Ascending aorta (tissue), 2 donors: ENCODE measurements at regions of chr1 and their contacts with region 1.

Region 1: GRCh38 chr1:109426278-109427170 is at the start of gene PSMA5:
- DNase-seq: peak; percentile 97 to 99
- H3K4me3 ChIP-seq: peak within 1 kb of the TSS; percentile 77 to 87
- H3K27ac ChIP-seq: peak within 1 kb of the TSS; percentile 87
- H3K4me1 ChIP-seq: peaks cover 4 to 12% of the 10 kb centered on the region in 2 donors
- H3K27me3 ChIP-seq: no peaks in the 10 kb centered on the region
- CTCF ChIP-seq: no peak
- total RNA-seq, gene PSMA5: 2.6 TPM

Region 2: GRCh38 chr1:108963052-108963686 is 463.4 kb before region 1 on chr1 and contains the start of gene CLCC1:
- intact Hi-C with region 1: loop called (anchors 5 kb)
- DNase-seq: peak; percentile 71 to 96
- H3K4me3 ChIP-seq: peak within 1 kb of the TSS; percentile 76 to 91
- H3K27ac ChIP-seq: peak within 1 kb of the TSS; percentile 93 to 97
- H3K4me1 ChIP-seq: peaks cover 11 to 13% of the 10 kb centered on the region in 2 donors
- H3K27me3 ChIP-seq: no peaks in the 10 kb centered on the region
- CTCF ChIP-seq: no peak
- total RNA-seq, gene CLCC1: 18.1 TPM

Region 3: DNA sequence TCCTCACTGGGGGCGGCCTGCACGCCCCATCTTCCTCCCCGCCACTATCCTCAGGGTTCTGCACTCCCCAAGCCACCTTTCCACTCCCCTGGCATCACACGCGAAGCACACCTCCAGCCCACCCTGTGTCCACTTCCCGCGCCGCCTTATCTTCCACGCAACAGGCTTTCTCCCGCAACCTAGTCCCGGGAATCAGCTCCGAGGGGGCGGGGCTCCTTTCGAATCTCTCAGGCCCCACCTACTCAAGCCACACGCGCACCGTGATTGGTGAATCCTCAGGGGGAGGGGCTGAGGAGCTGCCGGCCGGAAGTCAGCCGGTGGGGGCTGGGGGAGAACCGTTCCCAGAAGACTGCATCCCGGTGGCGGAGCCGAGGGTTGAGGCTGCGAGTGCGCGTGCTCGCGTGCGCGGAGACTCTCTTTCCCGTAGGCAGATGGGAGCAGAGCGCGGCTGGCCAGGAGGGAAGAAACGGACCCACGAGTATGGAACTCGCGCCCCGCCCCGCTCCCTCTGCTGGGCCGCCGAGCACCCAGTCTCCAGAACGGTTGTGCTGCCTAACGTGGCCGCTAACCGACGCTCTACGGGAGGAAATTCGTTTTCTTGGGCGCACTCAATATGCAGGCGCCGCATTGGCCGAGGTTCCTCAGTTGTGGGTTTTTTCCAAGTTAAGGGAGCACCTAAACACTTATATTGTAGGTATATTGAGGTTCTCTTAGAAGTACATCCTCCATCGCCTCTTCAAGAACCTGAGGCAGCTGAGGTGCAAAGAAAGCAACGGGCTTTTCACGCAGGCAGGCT is 143.4 kb before region 1 on chr1 and contains the start of gene PSRC1:
- intact Hi-C with region 1: loop called (anchors 1 kb)
- DNase-seq: peak; percentile 84 to 97
- H3K4me3 ChIP-seq: peak within 1 kb of the TSS; percentile 66 to 84
- H3K27ac ChIP-seq: peak within 1 kb of the TSS; percentile 84 to 91
- H3K4me1 ChIP-seq: peaks cover 0 to 13% of the 10 kb centered on the region in 2 donors
- H3K27me3 ChIP-seq: no peaks in the 10 kb centered on the region
- CTCF ChIP-seq: peak; percentile 45 to 65 (median 64)
- total RNA-seq, gene PSRC1: 1.3 TPM

Region 4: DNA sequence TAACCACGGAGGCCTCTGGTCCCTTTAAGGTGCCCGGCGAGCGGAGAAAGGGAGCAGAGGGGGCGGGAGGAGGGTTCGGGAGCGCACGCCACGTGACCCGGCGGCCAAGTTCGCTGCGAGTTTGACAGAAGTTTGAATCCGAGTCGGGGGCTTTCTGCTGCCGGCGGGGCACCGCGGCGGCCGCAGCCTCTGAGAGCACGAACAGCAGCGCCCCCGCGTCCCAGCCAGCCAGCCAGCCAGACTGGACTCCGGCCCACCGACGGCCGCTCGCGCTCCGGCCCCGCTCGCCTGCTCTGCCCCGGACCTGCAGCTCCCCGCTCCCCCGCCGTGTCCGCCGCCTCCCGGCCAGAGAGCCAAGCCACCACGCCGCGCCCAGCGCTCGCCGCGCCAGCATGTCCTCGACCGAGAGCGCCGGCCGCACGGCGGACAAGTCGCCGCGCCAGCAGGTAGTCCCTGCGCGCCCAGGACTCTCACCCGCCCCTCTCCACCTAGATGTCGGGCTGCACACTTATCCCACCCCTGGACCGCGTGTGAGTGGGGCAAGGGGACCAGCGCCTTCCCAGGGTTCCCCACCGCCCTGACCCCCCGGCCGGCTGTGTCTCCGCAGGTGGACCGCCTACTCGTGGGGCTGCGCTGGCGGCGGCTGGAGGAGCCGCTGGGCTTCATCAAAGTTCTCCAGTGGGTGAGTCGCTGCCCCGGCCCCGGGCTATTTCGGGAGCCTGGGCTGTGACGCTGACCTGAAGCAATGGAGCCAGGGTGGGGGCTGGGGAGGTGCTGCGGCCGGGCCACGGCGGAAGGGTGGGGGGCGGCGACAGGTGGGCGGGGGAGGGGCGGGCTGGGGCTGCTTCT is 40.2 kb after region 1 on chr1 and contains the start of gene SYPL2:
- intact Hi-C with region 1: loop called (anchors 1 kb)
- DNase-seq: peak in 1 of 2 donors; percentile 82
- H3K4me3 ChIP-seq: peak within 1 kb of the TSS; percentile 57 to 91
- H3K27ac ChIP-seq: peak within 1 kb of the TSS; percentile 74 to 92
- H3K4me1 ChIP-seq: no peaks in the 10 kb centered on the region
- H3K27me3 ChIP-seq: no peaks in the 10 kb centered on the region
- CTCF ChIP-seq: peak in 1 of 3 experiments; percentile 9
- total RNA-seq, gene SYPL2: 8.1 TPM

Region 5: DNA sequence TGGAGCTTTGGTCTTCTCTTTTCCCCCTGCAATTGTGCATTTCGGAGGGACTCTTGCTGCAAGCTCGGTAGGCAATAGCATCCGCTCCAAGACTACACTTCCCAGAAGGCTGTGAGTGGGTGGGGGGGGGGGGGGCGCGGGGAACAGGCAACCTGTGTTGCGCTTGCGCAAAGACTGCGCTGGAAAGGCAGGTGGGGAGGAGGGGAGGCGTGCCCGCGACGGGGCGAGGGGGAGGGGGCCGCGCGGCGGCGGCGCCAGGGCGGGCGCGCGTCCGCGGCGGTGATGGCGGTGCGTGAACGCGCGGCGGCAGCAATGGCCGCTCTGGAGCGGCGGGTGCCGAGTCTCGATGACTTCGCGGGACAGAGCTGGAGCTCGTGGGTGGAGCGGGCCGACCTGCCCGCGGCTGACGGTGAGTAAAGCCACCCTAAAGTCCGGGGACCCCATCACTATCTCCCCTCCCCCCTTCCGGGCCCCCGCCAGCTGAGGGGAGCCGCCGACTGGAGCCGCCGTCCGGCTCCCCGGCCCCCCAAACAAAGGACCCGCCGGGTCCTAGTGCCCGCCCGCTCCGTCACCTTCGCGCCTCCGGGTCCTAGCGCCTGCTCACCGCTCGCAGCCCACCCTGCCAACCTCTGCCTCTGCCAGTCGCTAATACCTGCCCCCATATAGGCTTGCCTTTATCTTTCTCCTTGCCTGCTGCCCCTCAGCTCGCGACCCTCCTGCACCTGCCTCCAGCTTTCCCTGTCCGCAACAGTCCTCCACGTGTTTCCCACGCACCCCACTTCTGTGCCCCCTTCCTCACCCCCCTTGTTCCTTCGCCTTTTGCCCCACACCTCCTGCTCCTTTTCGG is 57.4 kb after region 1 on chr1 and contains the start of gene ATXN7L2:
- intact Hi-C with region 1: loop called (anchors 1 kb)
- DNase-seq: peak; percentile 72 to 95
- H3K4me3 ChIP-seq: peak within 1 kb of the TSS; percentile 79
- H3K27ac ChIP-seq: peak within 1 kb of the TSS; percentile 91 to 93
- H3K4me1 ChIP-seq: peaks cover 6 to 12% of the 10 kb centered on the region in 2 donors
- H3K27me3 ChIP-seq: no peaks in the 10 kb centered on the region
- CTCF ChIP-seq: no peak
- total RNA-seq, gene ATXN7L2: 5.9 TPM

Region 6: DNA sequence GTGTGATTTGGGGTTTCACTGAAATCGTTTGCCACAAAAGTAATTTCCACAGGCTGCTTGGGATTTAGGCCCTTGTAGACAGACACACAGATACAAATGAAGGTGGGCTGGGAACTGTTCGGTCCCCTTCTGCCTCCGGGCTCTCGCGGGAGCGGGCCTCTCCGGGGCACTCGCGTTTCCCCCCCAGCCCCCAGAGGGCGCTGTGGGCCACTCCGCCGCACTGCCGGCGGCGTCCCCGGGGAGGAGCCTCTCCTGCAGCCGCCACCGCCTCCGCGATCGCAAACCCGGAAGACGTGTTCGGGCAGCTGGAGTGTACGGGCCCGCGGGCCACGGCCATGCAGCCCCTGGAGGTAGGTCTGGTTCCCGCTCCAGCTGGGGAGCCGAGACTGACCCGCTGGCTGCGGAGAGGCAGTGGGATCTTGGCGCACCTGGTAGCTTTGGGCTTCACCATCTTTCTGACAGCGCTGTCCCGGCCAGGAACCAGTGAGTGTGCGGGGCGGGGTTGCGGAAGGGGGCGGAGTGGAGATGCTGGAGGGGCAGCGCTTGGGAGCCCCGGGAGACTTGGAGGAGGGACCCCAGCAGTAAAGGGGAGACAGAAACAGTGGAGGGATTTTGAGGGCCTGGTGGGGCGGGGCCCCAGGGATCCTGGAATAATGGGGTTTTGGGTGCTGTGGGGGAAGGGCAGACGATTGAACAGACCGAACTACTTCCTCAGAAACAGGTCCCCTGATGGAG is 67.4 kb after region 1 on chr1 and contains the start of gene CYB561D1:
- intact Hi-C with region 1: loop called (anchors 2 kb)
- DNase-seq: peak; percentile 35 to 92
- H3K4me3 ChIP-seq: peak within 1 kb of the TSS; percentile 61 to 89
- H3K27ac ChIP-seq: peak within 1 kb of the TSS; percentile 78 to 84
- H3K4me1 ChIP-seq: peaks cover 7 to 18% of the 10 kb centered on the region in 2 donors
- H3K27me3 ChIP-seq: no peaks in the 10 kb centered on the region
- CTCF ChIP-seq: peak; percentile 92 to 98 (median 95)
- total RNA-seq, gene CYB561D1: 26.8 TPM

Region 7: GRCh38 chr1:109532365-109533136 is 106.0 kb after region 1 on chr1:
- intact Hi-C with region 1: loop called (anchors 1 kb)
- DNase-seq: peak; percentile 48 to 91
- H3K4me3 ChIP-seq: peak overlapping the region; percentile 11 to 44
- H3K27ac ChIP-seq: peak overlapping the region; percentile 45 to 64
- H3K4me1 ChIP-seq: peaks cover 0 to 4% of the 10 kb centered on the region in 2 donors
- H3K27me3 ChIP-seq: no peaks in the 10 kb centered on the region
- CTCF ChIP-seq: peak; percentile 95 to 98 (median 97)